ENCODE measurements at regions of chr4 and their contacts with region 1.

Region 1: GRCh38 chr4:20272411-20272872 is 20.7 kb downstream of the SLIT2 start:
- DNase-seq: no peak
- H3K4me3 ChIP-seq: no peak overlapping the region
- H3K27ac ChIP-seq: no peak overlapping the region
- H3K4me1 ChIP-seq: no peaks in the 10 kb centered on the region
- H3K27me3 ChIP-seq: no peaks in the 10 kb centered on the region
- CTCF ChIP-seq: no peak

Region 2: GRCh38 chr4:19164334-19164733 is 1108.1 kb before region 1 on chr4:
- CTCF ChIA-PET with region 1: no interaction called
- POLR2A ChIA-PET with region 1: no interaction called
- intact Hi-C with region 1: no loop called
- DNase-seq: no peak
- H3K4me3 ChIP-seq: no peak overlapping the region
- H3K27ac ChIP-seq: no peak overlapping the region
- H3K4me1 ChIP-seq: no peaks in the 10 kb centered on the region
- H3K27me3 ChIP-seq: no peaks in the 10 kb centered on the region
- CTCF ChIP-seq: no peak

Region 3: GRCh38 chr4:19748519-19749479 is 523.6 kb before region 1 on chr4:
- CTCF ChIA-PET with region 1: interaction called, 11 read pairs
- POLR2A ChIA-PET with region 1: no interaction called
- intact Hi-C with region 1: no loop called
- DNase-seq: no peak
- H3K4me3 ChIP-seq: no peak overlapping the region
- H3K27ac ChIP-seq: no peak overlapping the region
- H3K4me1 ChIP-seq: no peaks in the 10 kb centered on the region
- H3K27me3 ChIP-seq: no peaks in the 10 kb centered on the region
- CTCF ChIP-seq: no peak

Region 4: DNA sequence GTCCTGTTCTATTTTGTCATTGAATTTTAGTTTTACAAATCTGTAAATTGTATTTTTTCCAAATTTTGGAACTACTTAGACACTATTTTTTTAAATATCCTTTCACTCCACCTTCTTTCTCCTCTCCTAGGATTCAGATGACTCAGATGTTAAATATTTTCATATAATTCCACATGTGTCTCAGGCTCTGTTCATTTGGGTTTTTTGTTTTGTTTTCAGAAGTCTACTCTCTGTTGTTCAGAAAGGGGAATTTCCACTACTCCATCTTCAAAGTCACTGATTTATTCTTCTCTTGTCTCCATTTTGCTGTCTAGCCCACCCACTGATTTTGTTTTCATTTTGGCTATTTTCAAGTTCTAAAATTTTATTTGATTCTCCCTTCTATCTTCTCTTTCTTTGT is 284.7 kb before region 1 on chr4:
- CTCF ChIA-PET with region 1: no interaction called
- POLR2A ChIA-PET with region 1: no interaction called
- intact Hi-C with region 1: no loop called
- DNase-seq: no peak
- H3K4me3 ChIP-seq: no peak overlapping the region
- H3K27ac ChIP-seq: no peak overlapping the region
- H3K4me1 ChIP-seq: no peaks in the 10 kb centered on the region
- H3K27me3 ChIP-seq: no peaks in the 10 kb centered on the region
- CTCF ChIP-seq: no peak

Measured in PC-9 (cell line).